GM13976 (cell line): ENCODE measurements at regions of chr10 and their contacts with region 1.

Region 1: DNA sequence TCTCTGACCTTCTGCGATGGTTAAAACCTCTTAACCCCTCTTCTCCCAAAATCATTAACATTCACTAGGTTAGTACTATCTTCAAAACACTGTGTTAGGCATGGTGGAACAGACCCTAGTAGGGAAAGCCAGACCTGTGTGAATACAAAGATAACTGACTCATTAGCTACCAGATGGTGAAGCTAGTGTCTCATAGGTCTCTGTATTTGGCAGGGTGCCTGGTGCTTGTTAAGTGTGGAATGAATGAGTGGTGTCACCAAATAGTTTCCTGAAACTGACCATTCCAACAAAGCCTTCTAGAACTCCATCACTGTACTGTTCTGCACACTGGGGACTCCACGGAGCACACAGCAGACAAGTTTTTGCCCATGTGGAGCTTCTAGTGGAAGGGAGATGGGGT is 27.7 kb upstream of the TM9SF3 start:
- DNase-seq: no peak
- CTCF ChIP-seq: no peak

Region 2: DNA sequence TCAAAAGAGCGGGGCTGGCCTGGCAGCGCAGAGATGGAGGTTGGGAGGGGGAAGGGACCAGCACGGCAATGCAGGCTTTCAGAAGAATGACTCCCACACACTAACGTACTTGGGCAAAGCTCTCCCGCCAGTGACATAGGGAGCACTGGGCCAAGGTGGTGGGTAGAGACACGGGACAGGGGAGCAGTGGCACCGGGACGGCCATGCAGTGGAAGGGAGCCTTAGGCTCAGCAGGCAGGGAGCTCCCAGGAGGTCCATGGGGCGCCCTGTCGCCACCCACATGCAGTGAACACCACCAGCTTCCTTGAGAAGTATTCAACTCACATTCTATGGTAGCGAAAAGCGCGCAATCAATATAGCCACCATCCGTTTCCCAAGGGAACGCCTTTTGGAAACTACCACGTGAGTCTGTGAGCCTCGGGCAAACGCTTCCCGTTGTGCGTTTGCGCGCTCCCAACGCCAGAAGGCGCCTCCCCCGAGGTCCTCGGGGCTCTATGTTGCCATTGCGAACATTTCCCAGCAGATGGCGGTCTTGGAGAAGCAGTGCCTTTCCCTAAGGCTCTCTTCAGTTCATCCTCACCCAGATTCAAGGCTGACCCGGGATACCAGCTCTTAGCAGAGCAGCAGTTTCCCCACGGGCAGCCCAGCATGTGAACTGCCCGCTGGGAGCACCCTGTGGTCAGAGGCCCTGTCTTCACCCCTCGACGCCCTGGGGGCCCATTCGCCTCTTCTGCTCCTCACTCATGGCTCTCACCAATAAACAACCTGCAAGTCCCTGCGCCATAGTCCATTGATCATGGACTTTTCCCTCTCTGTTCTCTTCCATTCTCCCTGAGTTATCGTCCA is 239.3 kb before region 1 on chr10:
- in situ Hi-C with region 1: loop called (anchors 25 kb)
- DNase-seq: peak; percentile 95
- CTCF ChIP-seq: peak; percentile 99